Ovary (tissue), 10 donors: ENCODE measurements at regions of chr1 and their contacts with region 1.

Region 1: DNA sequence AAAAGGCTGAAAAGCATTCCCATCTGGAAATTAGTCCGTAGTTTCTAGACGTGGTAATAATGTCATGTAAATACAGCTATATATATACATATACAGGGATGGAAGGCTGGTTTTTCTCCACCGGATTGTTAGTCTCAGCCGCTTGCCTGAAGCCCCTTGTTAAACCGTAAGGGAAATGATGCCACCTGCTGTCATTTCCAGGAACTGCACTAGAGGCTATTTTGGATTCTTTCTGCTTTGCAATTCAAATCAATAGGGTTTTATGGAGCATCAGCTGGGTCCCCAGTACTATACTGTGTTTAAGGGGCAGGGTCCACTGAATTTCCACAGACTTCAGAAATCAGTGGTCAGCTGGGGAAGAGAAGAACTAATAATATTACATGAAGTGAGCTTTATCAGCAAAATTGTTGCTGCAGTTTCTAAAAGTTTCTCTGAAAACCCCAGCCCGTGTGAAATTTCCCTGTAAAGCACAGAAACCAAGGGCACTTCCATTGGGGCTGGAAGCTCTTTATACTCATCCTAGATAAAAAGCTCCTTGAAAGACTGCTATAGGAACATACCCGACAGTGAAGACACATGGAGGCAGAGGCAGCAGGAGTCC is 33.8 kb upstream of the MPZL1 start:
- DNase-seq: peak; percentile 39 to 82 (median 51)
- H3K4me3 ChIP-seq: no peak overlapping the region
- H3K27ac ChIP-seq: no peak overlapping the region
- H3K4me1 ChIP-seq: peaks cover 5% of the 10 kb centered on the region
- H3K27me3 ChIP-seq: no peaks in the 10 kb centered on the region
- CTCF ChIP-seq: peak; percentile 55 to 74 (median 64)
- EP300 ChIP-seq: no peak
- POLR2A ChIP-seq: no peak

Region 2: DNA sequence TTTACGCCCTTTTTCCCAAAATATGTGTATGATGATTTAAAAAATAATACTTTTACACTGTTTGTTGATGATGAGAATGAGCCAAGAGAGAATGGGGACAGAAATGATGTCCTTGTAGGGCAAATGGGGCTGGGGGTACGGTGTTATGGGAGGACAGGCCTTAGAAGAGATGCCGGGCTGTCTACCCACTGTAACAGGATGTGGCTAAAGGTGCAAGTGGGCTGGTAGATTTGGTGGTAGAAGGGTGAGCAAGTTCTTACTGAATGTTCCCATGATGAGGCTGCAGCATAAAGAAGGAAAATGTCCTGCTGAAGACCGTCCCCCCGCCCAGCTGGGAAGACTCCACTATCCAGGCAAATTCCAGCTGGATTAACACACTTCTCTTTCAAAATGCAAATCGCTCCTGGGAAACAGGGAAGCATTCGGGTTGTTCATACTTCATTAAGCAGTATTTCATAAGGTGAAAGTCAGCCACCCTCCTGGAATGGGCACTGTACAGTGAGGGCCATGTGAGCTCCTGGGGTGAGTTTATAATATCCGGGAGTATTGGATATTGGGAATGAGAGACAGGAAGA is 611.8 kb before region 1 on chr1:
- intact Hi-C with region 1: loop called in 1 of 4 experiments (anchors 1 kb)
- DNase-seq: no peak
- H3K4me3 ChIP-seq: no peak overlapping the region
- H3K27ac ChIP-seq: no peak overlapping the region
- H3K4me1 ChIP-seq: no peaks in the 10 kb centered on the region
- H3K27me3 ChIP-seq: no peaks in the 10 kb centered on the region
- CTCF ChIP-seq: no peak
- EP300 ChIP-seq: no peak
- POLR2A ChIP-seq: no peak

Region 3: GRCh38 chr1:167563579-167564246 is 124.3 kb before region 1 on chr1:
- intact Hi-C with region 1: loop called in 1 of 4 experiments (anchors 5 kb)
- DNase-seq: no peak
- H3K4me3 ChIP-seq: no peak overlapping the region
- H3K27ac ChIP-seq: no peak overlapping the region
- H3K4me1 ChIP-seq: no peaks in the 10 kb centered on the region
- H3K27me3 ChIP-seq: no peaks in the 10 kb centered on the region
- CTCF ChIP-seq: no peak
- EP300 ChIP-seq: no peak
- POLR2A ChIP-seq: no peak

Region 4: GRCh38 chr1:167599957-167600581 is 88.0 kb before region 1 on chr1:
- intact Hi-C with region 1: loop called in 1 of 4 experiments (anchors 2 kb)
- DNase-seq: no peak
- H3K4me3 ChIP-seq: no peak overlapping the region
- H3K27ac ChIP-seq: no peak overlapping the region
- H3K4me1 ChIP-seq: no peaks in the 10 kb centered on the region
- H3K27me3 ChIP-seq: no peaks in the 10 kb centered on the region
- CTCF ChIP-seq: no peak
- EP300 ChIP-seq: no peak
- POLR2A ChIP-seq: no peak

Region 5: DNA sequence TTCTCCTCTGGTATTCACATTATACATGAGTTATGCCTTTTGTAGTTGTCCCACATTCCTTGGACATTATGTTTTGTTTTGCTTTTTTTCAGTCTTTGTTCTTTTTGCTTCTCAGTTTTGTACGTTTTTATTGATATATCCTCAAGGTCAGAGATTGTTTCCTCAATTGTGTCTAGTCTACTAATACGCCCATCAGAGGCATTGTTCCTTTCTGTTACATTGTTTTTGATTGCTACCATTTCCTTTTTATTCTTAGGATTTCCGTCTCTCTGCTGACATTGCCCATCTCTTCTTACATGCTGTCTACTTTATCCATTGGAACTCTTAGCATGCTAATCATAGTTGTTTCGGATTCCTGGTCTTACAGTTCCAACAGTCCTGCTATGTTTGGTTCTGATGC is 276.6 kb after region 1 on chr1:
- intact Hi-C with region 1: no loop called
- DNase-seq: no peak
- H3K4me3 ChIP-seq: no peak overlapping the region
- H3K27ac ChIP-seq: no peak overlapping the region
- H3K4me1 ChIP-seq: peaks cover 1% of the 10 kb centered on the region
- H3K27me3 ChIP-seq: no peaks in the 10 kb centered on the region
- CTCF ChIP-seq: no peak
- EP300 ChIP-seq: no peak
- POLR2A ChIP-seq: no peak

Region 6: GRCh38 chr1:168452329-168452728 is 764.3 kb after region 1 on chr1:
- intact Hi-C with region 1: no loop called
- DNase-seq: no peak
- H3K4me3 ChIP-seq: no peak overlapping the region
- H3K27ac ChIP-seq: no peak overlapping the region
- H3K4me1 ChIP-seq: no peaks in the 10 kb centered on the region
- H3K27me3 ChIP-seq: no peaks in the 10 kb centered on the region
- CTCF ChIP-seq: no peak
- EP300 ChIP-seq: no peak
- POLR2A ChIP-seq: no peak